ENCODE measurements at regions of chr3 and their contacts with region 1.

Region 1: DNA sequence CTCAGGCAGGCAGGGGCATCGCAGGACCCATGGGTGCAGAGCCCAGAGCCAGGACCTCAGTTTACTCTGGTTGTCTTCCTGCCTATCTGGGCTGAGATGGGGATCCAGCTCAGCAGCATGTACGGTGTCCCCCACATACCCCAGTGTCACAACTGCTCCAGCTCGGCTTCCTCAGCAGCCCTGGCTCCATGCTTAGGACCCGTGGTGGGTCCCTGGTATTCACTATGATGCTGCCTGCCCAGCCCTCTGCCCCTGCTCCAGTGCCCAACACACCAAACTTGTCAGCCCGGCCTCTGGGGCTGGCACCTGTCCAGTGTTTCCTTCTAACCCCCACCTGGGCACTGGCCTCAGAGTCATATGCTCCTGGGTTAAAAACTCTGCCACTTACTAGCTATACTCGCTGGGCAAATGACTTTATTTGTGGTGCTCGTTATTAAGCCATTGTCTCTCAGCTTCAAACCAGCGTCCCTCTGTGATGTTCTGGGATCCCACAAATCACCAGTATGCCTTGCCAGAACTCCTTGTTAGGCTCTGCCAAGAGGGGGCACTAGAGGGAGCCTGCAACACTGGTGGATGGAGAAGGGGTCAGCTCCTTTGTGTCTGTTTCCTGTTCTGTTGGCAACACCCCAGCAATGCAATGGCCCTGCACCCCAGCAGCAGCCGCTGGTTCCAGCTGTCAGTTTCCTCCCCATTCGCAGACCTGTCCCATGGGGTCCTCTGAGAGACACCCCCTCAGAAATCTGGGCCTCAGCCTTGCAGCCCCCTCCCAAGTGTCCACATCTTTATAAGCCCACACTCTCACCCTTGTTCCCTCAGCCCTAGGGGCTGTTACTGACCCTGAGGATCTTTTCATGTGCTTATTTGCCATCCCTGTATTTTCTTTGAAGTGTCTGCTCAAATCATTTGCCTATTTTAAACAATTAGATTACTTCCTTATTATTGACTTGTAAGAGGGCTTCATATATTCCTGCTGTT is 24.1 kb upstream of the MRPS22 start:
- DNase-seq: peak; percentile 13
- H3K4me3 Mint-ChIP-seq: no peak overlapping the region
- H3K27ac Mint-ChIP-seq: no peak overlapping the region
- H3K4me1 Mint-ChIP-seq: peaks cover 19% of the 10 kb centered on the region
- H3K27me3 Mint-ChIP-seq: no peaks in the 10 kb centered on the region
- CTCF ChIP-seq: peak; percentile 22

Region 2: DNA sequence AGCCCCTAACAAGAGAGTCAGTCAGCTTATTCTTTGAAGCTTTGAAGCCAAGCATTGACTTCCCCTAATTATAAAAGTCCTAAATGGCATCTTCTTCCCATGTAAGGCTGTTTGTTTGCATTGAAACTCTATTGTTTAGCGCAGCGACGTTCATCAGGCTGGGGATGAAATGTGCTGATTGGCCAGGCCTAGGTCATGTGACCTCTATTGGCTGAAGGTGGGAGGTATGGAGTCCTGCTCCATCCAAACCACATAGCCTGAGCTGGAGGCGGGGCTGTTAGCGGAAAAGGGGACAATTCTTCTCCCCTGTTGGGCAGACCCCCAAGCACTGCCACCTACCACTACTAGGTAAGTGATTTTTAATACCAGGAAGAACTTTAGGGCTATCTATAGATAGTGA is 129.8 kb before region 1 on chr3:
- CTCF ChIA-PET with region 1: no interaction called
- POLR2A ChIA-PET with region 1: no interaction called
- intact Hi-C with region 1: no loop called
- DNase-seq: no peak
- H3K4me3 Mint-ChIP-seq: no peak overlapping the region
- H3K27ac Mint-ChIP-seq: no peak overlapping the region
- H3K4me1 Mint-ChIP-seq: no peaks in the 10 kb centered on the region
- H3K27me3 Mint-ChIP-seq: no peaks in the 10 kb centered on the region
- CTCF ChIP-seq: no peak

Region 3: GRCh38 chr3:139241783-139242182 is 77.9 kb before region 1 on chr3:
- CTCF ChIA-PET with region 1: no interaction called
- POLR2A ChIA-PET with region 1: no interaction called
- intact Hi-C with region 1: no loop called
- DNase-seq: no peak
- H3K4me3 Mint-ChIP-seq: no peak overlapping the region
- H3K27ac Mint-ChIP-seq: no peak overlapping the region
- H3K4me1 Mint-ChIP-seq: no peaks in the 10 kb centered on the region
- H3K27me3 Mint-ChIP-seq: peaks cover 76% of the 10 kb centered on the region
- CTCF ChIP-seq: no peak

Region 4: DNA sequence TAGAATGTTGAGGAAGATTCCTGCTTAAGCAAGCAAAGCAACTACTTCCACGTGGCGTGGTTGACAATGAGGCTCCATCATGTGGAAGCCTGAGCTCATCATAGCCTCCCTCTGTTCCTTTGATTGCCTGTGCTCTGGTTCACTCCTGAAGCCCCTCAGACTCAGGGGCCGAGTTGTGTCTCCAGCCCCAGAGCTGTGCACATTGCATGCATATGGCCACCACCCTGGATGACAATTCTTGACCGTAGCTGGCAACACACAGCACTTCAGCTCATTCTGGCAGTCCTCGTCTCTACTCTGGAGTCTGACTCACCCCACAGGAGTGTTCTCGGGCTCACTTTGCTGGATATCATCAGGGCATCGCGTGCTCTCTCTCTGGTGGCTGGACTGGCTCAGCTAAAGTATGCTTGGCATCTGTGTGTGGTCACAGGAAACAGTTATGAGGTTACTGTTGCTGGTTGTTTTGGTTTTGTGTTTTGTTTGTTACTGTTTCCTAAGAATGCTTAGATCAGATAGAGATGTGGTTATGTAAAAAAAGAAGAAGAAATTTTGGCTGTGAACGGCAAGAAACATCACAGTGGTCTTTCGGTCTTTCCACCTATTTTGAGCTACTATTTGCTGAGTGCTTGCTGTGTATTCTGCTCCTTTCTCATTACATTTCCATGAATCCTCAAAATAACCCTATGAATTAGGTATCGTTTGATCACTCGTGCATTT is 17.5 kb before region 1 on chr3:
- CTCF ChIA-PET with region 1: interaction called, 8 read pairs
- POLR2A ChIA-PET with region 1: interaction called, 4 read pairs
- intact Hi-C with region 1: loop called (anchors 1 kb)
- DNase-seq: peak; percentile 94
- H3K4me3 Mint-ChIP-seq: peak overlapping the region; percentile 13
- H3K27ac Mint-ChIP-seq: peak overlapping the region; percentile 90
- H3K4me1 Mint-ChIP-seq: peaks cover 32% of the 10 kb centered on the region
- H3K27me3 Mint-ChIP-seq: no peaks in the 10 kb centered on the region
- CTCF ChIP-seq: no peak

Measured in MCF 10A (cell line).